CD4-positive, alpha-beta T cell (primary cell): ENCODE measurements at regions of chr13 and their contacts with region 1.

Region 1: GRCh38 chr13:97109841-97110492 is 112.2 kb upstream of the MBNL2 start:
- DNase-seq: peak; percentile 60 to 89 (median 76)
- ATAC-seq: peak; percentile 91
- H3K4me3 ChIP-seq: no peak overlapping the region
- H3K4me3 Mint-ChIP-seq: peak overlapping the region; percentile 39
- H3K27ac ChIP-seq: no peak overlapping the region
- H3K27ac Mint-ChIP-seq: peak overlapping the region; percentile 24
- H3K4me1 ChIP-seq: peaks cover 14% of the 10 kb centered on the region
- H3K4me1 Mint-ChIP-seq: peaks cover 18% of the 10 kb centered on the region
- H3K27me3 ChIP-seq: peaks cover 2 to 9% of the 10 kb centered on the region in 2 experiments
- H3K27me3 Mint-ChIP-seq: peaks cover 10% of the 10 kb centered on the region
- CTCF ChIP-seq: peak; percentile 91

Region 2: GRCh38 chr13:97344265-97345175 is 234.6 kb after region 1 on chr13:
- CTCF ChIA-PET with region 1: interaction called, 26 read pairs
- POLR2A ChIA-PET with region 1: interaction called, 6 read pairs
- intact Hi-C with region 1: loop called (anchors 1 kb)
- DNase-seq: peak in 12 of 14 experiments; percentile 7 to 67 (median 36)
- ATAC-seq: peak; percentile 49
- H3K4me3 ChIP-seq: no peak overlapping the region
- H3K4me3 Mint-ChIP-seq: no peak overlapping the region
- H3K27ac ChIP-seq: no peak overlapping the region
- H3K27ac Mint-ChIP-seq: no peak overlapping the region
- H3K4me1 ChIP-seq: peaks cover 4% of the 10 kb centered on the region
- H3K4me1 Mint-ChIP-seq: no peaks in the 10 kb centered on the region
- H3K27me3 ChIP-seq: no peaks in the 10 kb centered on the region
- H3K27me3 Mint-ChIP-seq: no peaks in the 10 kb centered on the region
- CTCF ChIP-seq: peak; percentile 69

Region 3: GRCh38 chr13:97353927-97354675 is 244.1 kb after region 1 on chr13:
- CTCF ChIA-PET with region 1: interaction called, 69 read pairs
- POLR2A ChIA-PET with region 1: interaction called, 8 read pairs
- intact Hi-C with region 1: loop called (anchors 1 kb)
- DNase-seq: no peak
- ATAC-seq: no peak
- H3K4me3 ChIP-seq: no peak overlapping the region
- H3K4me3 Mint-ChIP-seq: no peak overlapping the region
- H3K27ac ChIP-seq: no peak overlapping the region
- H3K27ac Mint-ChIP-seq: no peak overlapping the region
- H3K4me1 ChIP-seq: no peaks in the 10 kb centered on the region
- H3K4me1 Mint-ChIP-seq: no peaks in the 10 kb centered on the region
- H3K27me3 ChIP-seq: no peaks in the 10 kb centered on the region
- H3K27me3 Mint-ChIP-seq: no peaks in the 10 kb centered on the region
- CTCF ChIP-seq: no peak

Region 4: GRCh38 chr13:97359181-97360057 is 249.5 kb after region 1 on chr13:
- CTCF ChIA-PET with region 1: interaction called, 69 read pairs
- POLR2A ChIA-PET with region 1: interaction called, 8 read pairs
- intact Hi-C with region 1: loop called (anchors 1 kb)
- DNase-seq: peak in 13 of 14 experiments; percentile 13 to 80 (median 26)
- ATAC-seq: peak; percentile 98
- H3K4me3 ChIP-seq: no peak overlapping the region
- H3K4me3 Mint-ChIP-seq: no peak overlapping the region
- H3K27ac ChIP-seq: no peak overlapping the region
- H3K27ac Mint-ChIP-seq: peak overlapping the region; percentile 10
- H3K4me1 ChIP-seq: no peaks in the 10 kb centered on the region
- H3K4me1 Mint-ChIP-seq: peaks cover 5% of the 10 kb centered on the region
- H3K27me3 ChIP-seq: no peaks in the 10 kb centered on the region
- H3K27me3 Mint-ChIP-seq: no peaks in the 10 kb centered on the region
- CTCF ChIP-seq: peak; percentile 83